ENCODE measurements at regions of chr1 and their contacts with region 1.

Region 1: GRCh38 chr1:218339267-218339831 is 5.8 kb upstream of the TGFB2 start:
- DNase-seq: no peak
- ATAC-seq: no peak
- H3K4me3 Mint-ChIP-seq: no peak overlapping the region
- H3K27ac Mint-ChIP-seq: no peak overlapping the region
- H3K4me1 Mint-ChIP-seq: peaks cover 26% of the 10 kb centered on the region
- H3K27me3 Mint-ChIP-seq: no peaks in the 10 kb centered on the region
- CTCF ChIP-seq: no peak; the same call in 1 of the 2 replicates

Region 2: GRCh38 chr1:218351391-218352074 is 12.2 kb after region 1 on chr1:
- CTCF ChIA-PET with region 1: interaction called, 17 read pairs
- POLR2A ChIA-PET with region 1: no interaction called
- DNase-seq: peak; percentile 33
- ATAC-seq: peak; percentile 67
- H3K4me3 Mint-ChIP-seq: no peak overlapping the region
- H3K27ac Mint-ChIP-seq: no peak overlapping the region
- H3K4me1 Mint-ChIP-seq: peaks cover 62% of the 10 kb centered on the region
- H3K27me3 Mint-ChIP-seq: peaks cover 9% of the 10 kb centered on the region
- CTCF ChIP-seq: 0 out of 2 replicates have a peak, but pooled peaks have one; percentile 26